Activated naive CD8-positive, alpha-beta T cell treated with anti-CD3 and anti-CD28 coated beads, Interleukin-2, amount 10 ng/mL, durations not matched to agents 7 days and 5 days (primary cell): ENCODE measurements at regions of chr1 and their contacts with region 1.

Region 1: GRCh38 chr1:88683541-88684481 is at the start of gene PKN2:
- DNase-seq: peak; percentile 98
- ATAC-seq: peak; percentile 94
- H3K4me3 Mint-ChIP-seq: peak within 1 kb of the TSS; percentile 98
- H3K27ac Mint-ChIP-seq: peak within 1 kb of the TSS; percentile 95
- H3K4me1 Mint-ChIP-seq: peaks cover 15% of the 10 kb centered on the region
- H3K27me3 Mint-ChIP-seq: no peaks in the 10 kb centered on the region
- total RNA-seq, gene PKN2: 32.4 to 36.7 TPM

Region 2: GRCh38 chr1:88661951-88662699 is 21.7 kb before region 1 on chr1:
- POLR2A ChIA-PET with region 1: interaction called, 60 read pairs
- DNase-seq: no peak
- ATAC-seq: no peak
- H3K4me3 Mint-ChIP-seq: no peak overlapping the region
- H3K27ac Mint-ChIP-seq: peak overlapping the region; percentile 83
- H3K4me1 Mint-ChIP-seq: peaks cover 21% of the 10 kb centered on the region
- H3K27me3 Mint-ChIP-seq: no peaks in the 10 kb centered on the region

Region 3: DNA sequence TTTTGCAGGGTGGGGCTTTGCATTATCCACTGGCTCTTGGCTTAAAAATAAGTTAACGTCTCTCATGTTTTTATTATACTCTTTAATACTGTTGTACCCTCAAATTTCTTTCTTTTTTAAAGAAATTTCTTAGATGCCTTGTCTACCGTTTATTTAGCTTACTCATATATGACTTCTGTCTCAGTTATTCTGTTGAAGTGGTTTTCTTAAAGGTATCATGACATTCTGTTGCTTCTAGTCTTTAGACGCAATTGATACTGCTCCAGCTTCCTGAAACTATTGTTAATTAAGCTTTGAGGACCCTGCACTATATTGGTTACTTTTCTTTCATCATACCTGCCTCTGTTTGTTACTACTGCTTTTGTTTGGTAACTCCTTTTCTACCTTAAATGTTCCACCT is 12.0 kb after region 1 on chr1:
- POLR2A ChIA-PET with region 1: interaction called, 10 read pairs
- DNase-seq: no peak
- ATAC-seq: no peak
- H3K4me3 Mint-ChIP-seq: no peak overlapping the region
- H3K27ac Mint-ChIP-seq: no peak overlapping the region
- H3K4me1 Mint-ChIP-seq: peaks cover 12% of the 10 kb centered on the region
- H3K27me3 Mint-ChIP-seq: no peaks in the 10 kb centered on the region

Region 4: DNA sequence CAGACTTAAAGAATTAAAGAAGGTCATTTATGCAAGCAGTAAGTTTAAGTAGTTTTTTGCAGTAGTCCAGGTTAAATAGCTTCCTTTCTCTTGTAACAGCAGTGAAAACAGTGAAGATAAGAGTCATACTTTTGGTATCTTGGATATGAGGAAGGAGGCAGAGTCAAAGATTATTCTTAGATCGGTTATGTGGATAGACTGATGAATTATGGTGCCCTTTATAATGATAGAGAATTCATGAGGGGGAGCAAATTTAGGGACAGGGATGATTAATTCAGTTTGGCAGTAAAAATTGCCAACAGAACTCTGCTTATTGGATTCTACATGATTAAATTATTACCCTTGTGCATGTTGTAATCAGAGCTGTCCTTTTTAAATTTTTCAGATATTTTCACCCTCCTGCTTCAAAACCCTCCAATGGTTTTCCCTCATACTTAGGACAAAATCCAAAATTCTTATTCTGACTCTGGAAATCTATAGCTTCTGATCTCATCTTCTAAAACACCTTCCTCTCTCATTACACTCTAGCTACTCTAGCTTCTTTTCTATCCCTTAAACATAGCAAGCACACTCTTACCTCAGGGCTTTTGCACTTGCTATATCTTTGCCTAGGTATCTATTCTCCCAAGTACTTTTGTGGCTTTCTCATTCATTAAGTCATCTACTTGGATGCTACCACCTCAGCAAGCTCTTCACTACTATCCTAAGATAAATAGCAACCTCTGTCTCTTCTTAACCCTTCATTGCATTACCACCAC is 80.0 kb after region 1 on chr1:
- POLR2A ChIA-PET with region 1: no interaction called
- DNase-seq: no peak
- ATAC-seq: no peak
- H3K4me3 Mint-ChIP-seq: no peak overlapping the region
- H3K27ac Mint-ChIP-seq: no peak overlapping the region
- H3K4me1 Mint-ChIP-seq: peaks cover 1% of the 10 kb centered on the region
- H3K27me3 Mint-ChIP-seq: no peaks in the 10 kb centered on the region

Region 5: DNA sequence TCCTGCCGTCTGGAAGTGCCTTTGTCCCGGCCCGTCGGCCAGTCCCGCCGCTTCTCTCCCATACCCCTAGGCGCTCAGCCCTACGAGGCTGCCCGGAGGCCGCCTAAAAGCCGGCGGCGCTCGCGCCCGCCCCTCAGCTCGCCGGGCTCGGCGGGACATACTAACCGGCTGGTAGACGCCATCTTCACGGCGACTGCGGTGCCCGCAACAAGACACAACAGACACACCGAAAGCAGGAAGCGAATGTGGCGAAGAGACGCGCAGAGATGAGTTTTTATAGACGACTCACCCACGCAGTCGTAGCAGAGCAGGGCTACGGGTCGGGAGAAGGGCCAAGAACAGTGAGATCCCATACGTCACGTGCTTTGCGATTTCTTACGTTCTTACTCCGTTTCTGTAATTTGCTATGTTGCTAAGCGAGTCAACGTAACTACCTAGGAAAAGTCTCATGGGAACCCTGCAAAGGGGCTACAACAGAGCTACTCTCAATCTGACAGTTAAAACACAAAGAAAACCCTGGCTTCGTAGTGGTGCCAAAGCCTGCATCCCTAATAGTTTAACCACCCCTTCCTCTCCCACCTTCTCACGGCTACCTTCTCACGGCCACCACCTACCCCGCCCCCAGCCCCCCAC is 207.6 kb after region 1 on chr1 and contains the start of gene GTF2B:
- POLR2A ChIA-PET with region 1: interaction called, 30 read pairs
- DNase-seq: peak; percentile 91
- ATAC-seq: peak; percentile 87
- H3K4me3 Mint-ChIP-seq: peak within 1 kb of the TSS; percentile 96
- H3K27ac Mint-ChIP-seq: peak within 1 kb of the TSS; percentile 98
- H3K4me1 Mint-ChIP-seq: peaks cover 26% of the 10 kb centered on the region
- H3K27me3 Mint-ChIP-seq: no peaks in the 10 kb centered on the region
- total RNA-seq, gene GTF2B: 40.2 to 41.7 TPM